ENCODE measurements at regions of chr11 and their contacts with region 1.

Region 1: GRCh38 chr11:66768088-66768521 is 39.1 kb upstream of the SPTBN2 start:
- DNase-seq: no peak
- H3K4me3 ChIP-seq: no peak overlapping the region
- H3K27ac ChIP-seq: no peak overlapping the region
- H3K4me1 ChIP-seq: no peaks in the 10 kb centered on the region
- H3K27me3 ChIP-seq: no peaks in the 10 kb centered on the region
- CTCF ChIP-seq: no peak

Region 2: GRCh38 chr11:66408488-66409214 is 359.5 kb before region 1 on chr11:
- CTCF ChIA-PET with region 1: no interaction called
- POLR2A ChIA-PET with region 1: no interaction called
- intact Hi-C with region 1: no loop called
- DNase-seq: peak; percentile 58 to 87
- H3K4me3 ChIP-seq: no peak overlapping the region
- H3K27ac ChIP-seq: no peak overlapping the region
- H3K4me1 ChIP-seq: no peaks in the 10 kb centered on the region
- H3K27me3 ChIP-seq: peaks cover 88% of the 10 kb centered on the region
- CTCF ChIP-seq: peak; percentile 100

Region 3: DNA sequence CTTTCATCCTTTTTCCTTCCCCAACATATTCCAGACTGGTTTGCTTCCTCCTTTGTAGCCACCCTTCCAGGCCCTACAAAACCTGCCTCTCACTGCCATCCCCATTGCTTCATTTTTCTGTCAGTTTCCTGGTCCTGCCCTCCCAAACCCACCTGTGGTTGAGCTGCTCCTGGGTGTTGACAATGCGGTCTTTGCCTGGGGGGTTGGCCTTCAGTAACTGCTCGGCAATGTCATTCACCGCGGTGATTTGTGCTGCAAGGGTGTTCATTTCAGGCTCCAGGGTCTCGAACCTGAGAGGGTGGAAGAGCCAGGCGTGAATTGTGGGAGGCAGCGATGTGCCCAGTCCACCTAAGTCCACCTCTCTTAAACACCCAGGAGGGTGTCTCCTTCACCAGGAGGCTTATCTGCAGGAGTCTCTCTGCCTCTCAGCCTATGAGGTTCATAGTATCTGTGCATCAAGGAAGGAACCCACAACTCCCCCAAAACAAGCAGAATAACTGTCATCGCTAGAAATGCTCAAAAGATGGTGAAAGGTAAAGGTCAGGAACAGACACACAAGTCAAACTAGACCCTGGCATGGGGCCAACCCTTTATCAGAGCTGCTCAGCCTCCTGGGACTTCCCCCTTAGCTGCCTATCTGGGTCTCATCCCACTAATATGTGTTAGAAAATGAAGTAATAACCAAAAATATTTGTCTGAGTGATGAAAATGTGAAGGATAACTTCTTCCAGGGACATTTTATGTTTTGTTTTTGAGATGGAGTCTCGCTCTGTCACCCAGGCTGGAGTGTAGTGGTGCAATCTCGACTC is 66.5 kb before region 1 on chr11:
- CTCF ChIA-PET with region 1: no interaction called
- POLR2A ChIA-PET with region 1: no interaction called
- intact Hi-C with region 1: no loop called
- DNase-seq: no peak
- H3K4me3 ChIP-seq: no peak overlapping the region
- H3K27ac ChIP-seq: no peak overlapping the region
- H3K4me1 ChIP-seq: no peaks in the 10 kb centered on the region
- H3K27me3 ChIP-seq: no peaks in the 10 kb centered on the region
- CTCF ChIP-seq: no peak

Region 4: DNA sequence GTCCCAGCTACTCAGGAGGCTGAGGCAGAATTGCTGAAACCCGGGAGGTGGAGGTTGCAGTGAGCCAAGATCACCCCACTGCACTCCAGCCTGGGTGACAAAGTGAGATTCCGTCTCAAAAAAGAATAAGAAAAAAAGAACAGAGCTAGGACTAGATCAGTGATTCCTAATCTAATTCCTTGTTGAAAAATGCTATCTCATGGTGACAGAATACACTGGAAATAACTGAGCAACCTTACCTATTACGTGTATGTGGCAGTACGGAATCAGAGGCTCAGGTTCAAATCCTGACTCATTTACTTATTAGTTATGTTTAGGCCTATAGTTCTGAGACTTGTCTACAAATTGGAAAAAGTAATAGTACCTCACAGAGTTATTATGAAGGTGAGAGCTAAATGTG is 55.6 kb after region 1 on chr11:
- CTCF ChIA-PET with region 1: interaction called, 13 read pairs
- POLR2A ChIA-PET with region 1: no interaction called
- intact Hi-C with region 1: no loop called
- DNase-seq: no peak
- H3K4me3 ChIP-seq: no peak overlapping the region
- H3K27ac ChIP-seq: no peak overlapping the region
- H3K4me1 ChIP-seq: no peaks in the 10 kb centered on the region
- H3K27me3 ChIP-seq: no peaks in the 10 kb centered on the region
- CTCF ChIP-seq: no peak

Region 5: GRCh38 chr11:66835768-66836405 is 67.8 kb after region 1 on chr11:
- CTCF ChIA-PET with region 1: no interaction called
- POLR2A ChIA-PET with region 1: no interaction called
- intact Hi-C with region 1: no loop called
- DNase-seq: no peak
- H3K4me3 ChIP-seq: no peak overlapping the region
- H3K27ac ChIP-seq: no peak overlapping the region
- H3K4me1 ChIP-seq: peaks cover 9% of the 10 kb centered on the region
- H3K27me3 ChIP-seq: no peaks in the 10 kb centered on the region
- CTCF ChIP-seq: no peak